ENCODE measurements at regions of chr2 and their contacts with region 1.

Region 1: DNA sequence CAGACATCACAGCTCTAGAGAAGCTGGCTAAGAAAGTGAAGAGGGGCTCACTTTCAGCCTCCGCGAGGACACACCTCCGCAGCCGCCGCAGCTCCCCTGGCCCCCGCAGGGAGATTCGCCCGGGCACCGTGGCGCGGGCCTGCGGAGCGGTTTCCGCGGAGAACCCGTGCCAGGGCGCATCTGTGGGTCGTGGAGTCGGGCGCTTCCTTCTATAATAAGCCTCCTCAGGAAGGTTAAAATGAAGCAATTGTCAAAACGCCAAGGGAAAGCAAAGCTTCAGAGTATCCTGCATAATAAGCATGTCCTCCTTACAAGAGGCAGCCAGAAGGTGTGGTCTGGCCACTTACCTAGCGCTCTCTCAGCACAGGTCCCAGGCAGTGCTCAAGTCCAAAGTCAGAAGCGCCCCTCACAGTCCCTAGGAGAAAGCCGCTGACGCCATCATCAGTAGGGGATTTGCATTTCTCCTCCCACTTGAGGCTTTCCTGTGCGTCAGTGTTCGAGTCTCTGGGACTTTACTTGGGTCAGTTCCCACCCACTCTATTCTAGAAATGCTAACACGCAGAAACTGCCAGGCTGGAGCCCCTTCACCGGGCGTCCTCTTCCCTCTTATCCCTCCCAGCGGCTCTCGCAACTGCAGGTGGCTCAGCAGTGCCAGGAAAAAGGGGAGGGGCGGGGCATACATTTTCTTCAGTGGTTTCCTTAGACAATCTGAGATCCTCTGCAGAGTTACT is at the start of gene STAT4:
- DNase-seq: peak; percentile 91
- ATAC-seq: peak; percentile 86
- H3K4me3 Mint-ChIP-seq: peak within 1 kb of the TSS; percentile 92
- H3K27ac Mint-ChIP-seq: peak within 1 kb of the TSS; percentile 97
- H3K4me1 Mint-ChIP-seq: peaks cover 72% of the 10 kb centered on the region
- H3K27me3 Mint-ChIP-seq: no peaks in the 10 kb centered on the region
- total RNA-seq, gene STAT4: 154 to 157 TPM

Region 2: DNA sequence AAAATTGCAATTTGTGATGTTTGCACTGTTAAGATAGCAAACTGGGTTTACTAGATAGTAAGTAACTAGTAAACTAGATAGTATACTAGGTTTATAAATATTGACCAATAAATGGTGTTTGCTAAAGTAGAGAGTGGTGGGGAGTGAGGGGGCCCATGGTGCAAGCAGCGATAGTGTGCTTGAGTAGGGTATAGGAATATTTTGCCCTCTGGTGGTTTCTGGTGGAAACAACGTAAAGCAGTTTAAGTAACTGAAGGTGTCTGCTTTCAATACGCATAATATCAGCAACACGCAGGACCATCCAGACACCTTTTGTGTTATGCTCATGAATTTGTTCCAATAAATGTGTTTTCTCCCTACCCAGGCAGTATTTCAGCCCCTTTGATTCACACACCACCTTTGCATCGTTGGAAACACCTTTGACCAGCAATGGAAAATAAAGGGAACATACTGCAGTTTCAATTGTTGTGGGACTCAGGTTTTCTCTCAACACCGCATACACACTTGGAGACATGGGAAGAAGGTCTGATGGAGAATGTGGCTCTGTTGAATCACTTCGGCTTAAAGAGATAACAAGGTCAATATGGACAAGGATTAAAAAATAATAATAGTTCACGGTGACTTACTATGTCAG is 120.1 kb before region 1 on chr2:
- CTCF ChIA-PET with region 1: interaction called, 29 read pairs
- POLR2A ChIA-PET with region 1: no interaction called
- DNase-seq: peak; percentile 69
- ATAC-seq: peak; percentile 87
- H3K4me3 Mint-ChIP-seq: no peak overlapping the region
- H3K27ac Mint-ChIP-seq: peak overlapping the region; percentile 20
- H3K4me1 Mint-ChIP-seq: peaks cover 60% of the 10 kb centered on the region
- H3K27me3 Mint-ChIP-seq: no peaks in the 10 kb centered on the region

Region 3: GRCh38 chr2:191066197-191066918 is 84.4 kb before region 1 on chr2:
- CTCF ChIA-PET with region 1: interaction called, 1,116 read pairs
- POLR2A ChIA-PET with region 1: interaction called, 165 read pairs
- DNase-seq: peak; percentile 41
- ATAC-seq: peak; percentile 37
- H3K4me3 Mint-ChIP-seq: peak overlapping the region; percentile 72
- H3K27ac Mint-ChIP-seq: peak overlapping the region; percentile 85
- H3K4me1 Mint-ChIP-seq: peaks cover 70% of the 10 kb centered on the region
- H3K27me3 Mint-ChIP-seq: no peaks in the 10 kb centered on the region

Region 4: GRCh38 chr2:191128172-191128910 is 22.4 kb before region 1 on chr2:
- CTCF ChIA-PET with region 1: interaction called, 14 read pairs
- POLR2A ChIA-PET with region 1: interaction called, 31 read pairs
- DNase-seq: peak; percentile 44
- ATAC-seq: peak; percentile 88
- H3K4me3 Mint-ChIP-seq: peak overlapping the region; percentile 66
- H3K27ac Mint-ChIP-seq: peak overlapping the region; percentile 91
- H3K4me1 Mint-ChIP-seq: peaks cover 77% of the 10 kb centered on the region
- H3K27me3 Mint-ChIP-seq: no peaks in the 10 kb centered on the region

Region 5: GRCh38 chr2:191195021-191195420 is 44.3 kb after region 1 on chr2:
- CTCF ChIA-PET with region 1: interaction called, 13 read pairs
- POLR2A ChIA-PET with region 1: interaction called, 4 read pairs
- DNase-seq: no peak
- ATAC-seq: no peak
- H3K4me3 Mint-ChIP-seq: no peak overlapping the region
- H3K27ac Mint-ChIP-seq: peak overlapping the region; percentile 97
- H3K4me1 Mint-ChIP-seq: peaks cover 45% of the 10 kb centered on the region
- H3K27me3 Mint-ChIP-seq: no peaks in the 10 kb centered on the region